GM12878 (cell line): ENCODE measurements at regions of chr10 and their contacts with region 1.

Region 1: GRCh38 chr10:69914398-69915214 is 112.9 kb downstream of the COL13A1 start:
- DNase-seq: no peak
- ATAC-seq: peak; percentile 97
- H3K4me3 ChIP-seq: no peak overlapping the region
- H3K27ac ChIP-seq: no peak overlapping the region
- H3K4me1 ChIP-seq: no peaks in the 10 kb centered on the region
- H3K27me3 ChIP-seq: peaks cover 0 to 3% of the 10 kb centered on the region in 2 experiments
- CTCF ChIP-seq: peak; percentile 88 to 91 (median 88)
- EP300 ChIP-seq: no peak
- POLR2A ChIP-seq: no peak
- RAD21 ChIP-seq: peak; percentile 61

Region 2: DNA sequence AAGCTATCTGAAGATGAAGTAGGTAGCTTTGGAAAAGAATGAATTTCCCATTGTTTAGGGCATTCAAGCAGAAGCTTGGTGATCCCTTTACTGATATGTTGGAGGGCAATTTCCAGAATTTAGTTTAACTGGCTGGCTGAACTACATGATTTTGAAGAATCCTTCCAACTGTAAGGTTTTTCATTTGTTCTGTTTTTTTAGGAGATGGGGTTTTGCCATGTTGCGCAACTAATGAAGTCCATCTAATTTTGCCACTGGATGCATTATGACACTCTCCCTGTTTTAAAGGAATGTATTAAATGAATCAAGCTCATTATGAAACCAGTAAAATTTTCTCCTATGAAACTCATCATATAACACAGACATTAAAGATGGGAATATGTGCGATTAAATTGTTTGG is 1019.6 kb before region 1 on chr10:
- CTCF ChIA-PET with region 1: no interaction called
- POLR2A ChIA-PET with region 1: no interaction called
- RAD21 ChIA-PET with region 1: no interaction called
- SMC1A ChIA-PET with region 1: no interaction called
- in situ Hi-C with region 1: no loop called
- intact Hi-C with region 1: no loop called
- DNase-seq: no peak
- ATAC-seq: no peak
- H3K4me3 ChIP-seq: no peak overlapping the region
- H3K27ac ChIP-seq: no peak overlapping the region
- H3K4me1 ChIP-seq: no peaks in the 10 kb centered on the region
- H3K27me3 ChIP-seq: no peaks in the 10 kb centered on the region; a peak in 1 of 4 replicates
- CTCF ChIP-seq: no peak
- EP300 ChIP-seq: no peak
- POLR2A ChIP-seq: no peak
- RAD21 ChIP-seq: no peak

Region 3: GRCh38 chr10:69644658-69645295 is 269.8 kb before region 1 on chr10:
- CTCF ChIA-PET with region 1: interaction called, 19 read pairs
- POLR2A ChIA-PET with region 1: no interaction called
- RAD21 ChIA-PET with region 1: no interaction called
- SMC1A ChIA-PET with region 1: interaction called, 6 read pairs
- in situ Hi-C with region 1: no loop called
- intact Hi-C with region 1: loop called (anchors 2 kb)
- DNase-seq: no peak
- ATAC-seq: peak; percentile 69
- H3K4me3 ChIP-seq: no peak overlapping the region
- H3K27ac ChIP-seq: no peak overlapping the region
- H3K4me1 ChIP-seq: no peaks in the 10 kb centered on the region
- H3K27me3 ChIP-seq: no peaks in the 10 kb centered on the region
- CTCF ChIP-seq: peak; percentile 68 to 77 (median 74)
- EP300 ChIP-seq: no peak
- POLR2A ChIP-seq: no peak
- RAD21 ChIP-seq: peak; percentile 59

Region 4: GRCh38 chr10:69883310-69884023 is 31.1 kb before region 1 on chr10:
- CTCF ChIA-PET with region 1: interaction called, 10 read pairs
- POLR2A ChIA-PET with region 1: no interaction called
- RAD21 ChIA-PET with region 1: interaction called, 5 read pairs
- SMC1A ChIA-PET with region 1: no interaction called
- in situ Hi-C with region 1: no loop called
- intact Hi-C with region 1: no loop called
- DNase-seq: no peak
- ATAC-seq: peak; percentile 44; the same call in 2 of the 3 replicates
- H3K4me3 ChIP-seq: no peak overlapping the region
- H3K27ac ChIP-seq: no peak overlapping the region
- H3K4me1 ChIP-seq: no peaks in the 10 kb centered on the region
- H3K27me3 ChIP-seq: peaks cover 0 to 2% of the 10 kb centered on the region in 2 experiments; a peak in 3 of 4 replicates
- CTCF ChIP-seq: peak in 2 of 3 experiments; percentile 10 to 26; a peak in 3 of 6 replicates
- EP300 ChIP-seq: no peak
- POLR2A ChIP-seq: no peak
- RAD21 ChIP-seq: peak; percentile 25; the same call in 1 of the 2 replicates

Region 5: GRCh38 chr10:69925111-69925510 is 10.5 kb after region 1 on chr10:
- CTCF ChIA-PET with region 1: interaction called, 11 read pairs
- POLR2A ChIA-PET with region 1: no interaction called
- RAD21 ChIA-PET with region 1: no interaction called
- SMC1A ChIA-PET with region 1: interaction called, 4 read pairs
- in situ Hi-C with region 1: no loop called
- intact Hi-C with region 1: no loop called
- DNase-seq: no peak
- ATAC-seq: no peak
- H3K4me3 ChIP-seq: no peak overlapping the region
- H3K27ac ChIP-seq: no peak overlapping the region
- H3K4me1 ChIP-seq: no peaks in the 10 kb centered on the region
- H3K27me3 ChIP-seq: peaks cover 0 to 2% of the 10 kb centered on the region in 2 experiments; a peak in 2 of 4 replicates
- CTCF ChIP-seq: no peak
- EP300 ChIP-seq: no peak
- POLR2A ChIP-seq: no peak
- RAD21 ChIP-seq: no peak

Region 6: DNA sequence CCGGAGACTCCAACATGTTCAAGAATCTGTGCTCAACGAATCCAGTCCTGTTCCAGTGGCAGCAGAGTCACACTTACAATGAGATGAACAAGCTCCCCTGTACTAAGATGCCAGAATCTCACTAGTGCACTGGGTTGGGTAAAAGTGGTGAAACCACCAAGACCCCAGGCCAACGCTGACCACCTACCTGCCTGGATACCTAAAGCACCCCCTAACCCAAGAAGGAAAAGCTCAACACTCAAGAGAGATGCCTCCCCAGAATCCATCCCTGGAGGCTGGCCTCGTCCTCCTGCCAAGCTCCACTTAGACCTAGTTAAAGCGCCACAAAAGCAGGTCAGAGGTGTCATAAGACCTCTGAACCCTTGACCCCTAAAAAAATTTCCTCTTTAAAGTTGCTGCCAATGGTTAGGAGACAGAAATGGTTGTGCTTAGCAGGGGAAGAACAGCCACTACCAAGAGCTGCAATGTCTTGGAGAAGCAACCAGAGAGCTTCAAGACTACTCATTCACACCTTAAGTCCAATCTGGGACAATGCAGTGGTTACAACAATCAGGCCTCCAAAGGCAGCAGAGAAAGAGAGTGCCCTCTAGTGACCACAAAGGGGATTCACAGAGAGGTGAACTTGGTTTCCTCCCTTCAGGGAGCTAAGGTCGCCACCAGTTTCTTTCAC is 43.4 kb after region 1 on chr10:
- CTCF ChIA-PET with region 1: interaction called, 30 read pairs
- POLR2A ChIA-PET with region 1: no interaction called
- RAD21 ChIA-PET with region 1: interaction called, 22 read pairs
- SMC1A ChIA-PET with region 1: interaction called, 11 read pairs
- in situ Hi-C with region 1: no loop called
- intact Hi-C with region 1: no loop called
- DNase-seq: no peak
- ATAC-seq: peak; percentile 81
- H3K4me3 ChIP-seq: no peak overlapping the region
- H3K27ac ChIP-seq: no peak overlapping the region
- H3K4me1 ChIP-seq: peaks cover 9% of the 10 kb centered on the region
- H3K27me3 ChIP-seq: peaks cover 0 to 2% of the 10 kb centered on the region in 2 experiments; a peak in 2 of 4 replicates
- CTCF ChIP-seq: peak; percentile 84 to 91 (median 90)
- EP300 ChIP-seq: no peak
- POLR2A ChIP-seq: no peak
- RAD21 ChIP-seq: peak; percentile 83